ENCODE measurements at regions of chr17 and their contacts with region 1.

Region 1: GRCh38 chr17:39244600-39245570 is 19.1 kb upstream of the STAC2 start:
- DNase-seq: peak; percentile 86
- ATAC-seq: peak; percentile 89 to 91

Region 2: GRCh38 chr17:39209317-39210092 is 35.4 kb before region 1 on chr17:
- intact Hi-C with region 1: loop called in 1 of 2 experiments (anchors 5 kb)
- DNase-seq: peak; percentile 84
- ATAC-seq: peak; percentile 80 to 83

Measured in left cardiac atrium (tissue), 4 donors.